ENCODE measurements at regions of chr11 and their contacts with region 1.

Region 1: GRCh38 chr11:114036156-114036811 is 23.2 kb upstream of the ZBTB16 start:
- DNase-seq: peak; percentile 48
- H3K4me3 ChIP-seq: peak overlapping the region; percentile 33 to 53 (median 34)
- H3K27ac ChIP-seq: no peak overlapping the region
- H3K4me1 ChIP-seq: no peaks in the 10 kb centered on the region
- H3K27me3 ChIP-seq: no peaks in the 10 kb centered on the region
- CTCF ChIP-seq: peak; percentile 80 to 93

Region 2: DNA sequence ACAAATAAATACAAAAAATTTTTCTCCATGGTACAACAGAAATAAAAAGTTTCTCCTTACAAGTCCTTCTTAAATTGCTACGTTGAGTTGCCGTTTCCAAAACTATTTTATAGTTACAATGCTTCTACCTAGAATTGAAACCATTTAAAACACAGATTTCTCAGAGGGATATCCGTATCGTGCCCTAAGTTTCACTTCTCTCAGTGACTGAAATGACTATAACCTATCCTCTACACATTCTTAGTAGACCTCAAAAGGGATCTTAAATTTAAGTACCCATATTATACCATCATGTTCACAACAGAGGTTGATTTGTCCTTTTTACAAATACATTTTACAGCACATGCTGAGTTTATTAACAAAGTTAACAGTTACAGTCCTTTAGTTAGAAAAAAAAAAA is 205.0 kb before region 1 on chr11:
- CTCF ChIA-PET with region 1: no interaction called
- dilution Hi-C with region 1: no loop called
- in situ Hi-C with region 1: no loop called
- intact Hi-C with region 1: no loop called
- DNase-seq: no peak
- H3K4me3 ChIP-seq: no peak overlapping the region
- H3K27ac ChIP-seq: no peak overlapping the region
- H3K4me1 ChIP-seq: peaks cover 12% of the 10 kb centered on the region
- H3K27me3 ChIP-seq: no peaks in the 10 kb centered on the region
- CTCF ChIP-seq: no peak

Region 3: DNA sequence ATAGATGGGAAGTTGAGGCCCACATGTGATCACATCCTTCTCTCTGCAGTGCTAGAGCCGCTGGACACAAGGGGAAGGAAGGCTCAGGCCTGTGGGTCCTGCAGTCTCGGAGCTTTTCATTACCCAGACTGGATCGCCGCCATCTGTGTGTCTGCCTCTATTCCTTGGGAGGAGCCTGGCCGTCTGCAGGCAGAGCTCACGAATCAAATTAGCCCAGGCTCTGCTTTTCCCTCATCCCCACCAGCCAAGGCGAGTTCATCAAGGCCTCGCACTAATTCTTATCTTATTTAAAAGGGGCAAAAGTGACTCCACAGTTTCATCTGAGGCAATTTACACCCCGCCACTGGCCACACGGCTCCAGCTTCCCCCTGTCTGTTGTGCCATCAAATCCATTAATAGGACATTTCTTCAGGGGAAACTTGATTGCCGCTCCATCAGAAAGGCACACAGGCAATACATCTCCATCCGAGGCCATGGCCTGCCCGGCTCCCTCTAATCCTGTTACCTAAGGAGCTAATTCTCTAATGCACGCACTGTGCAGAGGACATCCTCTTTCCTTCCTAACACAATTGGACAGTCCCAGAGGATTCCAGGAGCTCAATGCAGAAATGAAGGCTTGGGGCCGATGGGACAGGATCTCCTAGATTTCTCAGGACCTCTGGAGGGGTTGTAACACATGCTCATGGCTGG is 64.6 kb before region 1 on chr11:
- CTCF ChIA-PET with region 1: no interaction called
- dilution Hi-C with region 1: no loop called
- in situ Hi-C with region 1: no loop called
- intact Hi-C with region 1: no loop called
- DNase-seq: no peak
- H3K4me3 ChIP-seq: no peak overlapping the region
- H3K27ac ChIP-seq: no peak overlapping the region
- H3K4me1 ChIP-seq: no peaks in the 10 kb centered on the region
- H3K27me3 ChIP-seq: no peaks in the 10 kb centered on the region
- CTCF ChIP-seq: no peak

Region 4: DNA sequence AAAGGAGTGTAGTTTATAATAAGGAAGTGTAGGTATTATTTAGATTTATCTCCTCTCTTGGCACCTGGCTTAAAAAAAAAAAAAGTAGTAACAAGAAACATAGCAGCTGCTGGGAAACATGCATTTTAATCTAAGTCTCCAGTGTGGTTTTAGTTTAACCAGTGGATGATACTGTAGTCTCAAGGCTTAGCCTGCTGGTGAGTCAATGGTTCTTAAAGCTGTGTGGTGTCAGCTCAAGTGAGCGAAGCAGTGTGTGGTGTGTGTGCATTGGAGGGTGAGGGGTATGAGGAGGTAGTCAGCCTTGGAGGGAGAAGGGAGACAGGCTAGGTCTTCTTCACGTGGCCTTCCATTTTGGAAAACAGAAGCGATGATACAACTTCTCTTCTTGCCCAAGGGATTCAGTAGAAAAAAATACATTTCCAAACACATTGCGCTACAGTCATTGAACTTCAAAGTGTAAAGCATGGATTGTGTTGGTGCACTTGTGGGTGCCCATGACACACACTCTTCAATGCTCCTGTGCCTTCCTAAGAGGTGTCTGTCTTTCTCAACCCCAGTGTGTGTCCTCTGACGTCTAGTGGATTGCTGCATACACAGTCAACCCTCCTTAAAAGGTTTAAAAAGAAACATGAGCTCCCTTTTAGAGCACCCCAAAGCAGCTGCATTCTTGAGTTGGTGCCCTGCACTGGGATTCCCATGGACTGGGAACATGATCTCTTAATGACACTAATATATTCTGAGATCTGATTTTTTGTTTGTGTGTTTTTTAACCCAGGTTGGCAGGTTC is 63.3 kb after region 1 on chr11:
- CTCF ChIA-PET with region 1: no interaction called
- dilution Hi-C with region 1: loop called (anchors 5 kb)
- in situ Hi-C with region 1: no loop called
- intact Hi-C with region 1: no loop called
- DNase-seq: no peak
- H3K4me3 ChIP-seq: no peak overlapping the region
- H3K27ac ChIP-seq: no peak overlapping the region
- H3K4me1 ChIP-seq: no peaks in the 10 kb centered on the region
- H3K27me3 ChIP-seq: no peaks in the 10 kb centered on the region
- CTCF ChIP-seq: no peak

Region 5: GRCh38 chr11:114317787-114318137 is 281.5 kb after region 1 on chr11:
- CTCF ChIA-PET with region 1: no interaction called
- dilution Hi-C with region 1: no loop called
- in situ Hi-C with region 1: no loop called
- intact Hi-C with region 1: no loop called
- DNase-seq: no peak
- H3K4me3 ChIP-seq: no peak overlapping the region
- H3K27ac ChIP-seq: no peak overlapping the region
- H3K4me1 ChIP-seq: no peaks in the 10 kb centered on the region
- H3K27me3 ChIP-seq: no peaks in the 10 kb centered on the region
- CTCF ChIP-seq: peak; percentile 25 to 52